GM12878 (cell line): ENCODE measurements at regions of chr3 and their contacts with region 1.

Region 1: DNA sequence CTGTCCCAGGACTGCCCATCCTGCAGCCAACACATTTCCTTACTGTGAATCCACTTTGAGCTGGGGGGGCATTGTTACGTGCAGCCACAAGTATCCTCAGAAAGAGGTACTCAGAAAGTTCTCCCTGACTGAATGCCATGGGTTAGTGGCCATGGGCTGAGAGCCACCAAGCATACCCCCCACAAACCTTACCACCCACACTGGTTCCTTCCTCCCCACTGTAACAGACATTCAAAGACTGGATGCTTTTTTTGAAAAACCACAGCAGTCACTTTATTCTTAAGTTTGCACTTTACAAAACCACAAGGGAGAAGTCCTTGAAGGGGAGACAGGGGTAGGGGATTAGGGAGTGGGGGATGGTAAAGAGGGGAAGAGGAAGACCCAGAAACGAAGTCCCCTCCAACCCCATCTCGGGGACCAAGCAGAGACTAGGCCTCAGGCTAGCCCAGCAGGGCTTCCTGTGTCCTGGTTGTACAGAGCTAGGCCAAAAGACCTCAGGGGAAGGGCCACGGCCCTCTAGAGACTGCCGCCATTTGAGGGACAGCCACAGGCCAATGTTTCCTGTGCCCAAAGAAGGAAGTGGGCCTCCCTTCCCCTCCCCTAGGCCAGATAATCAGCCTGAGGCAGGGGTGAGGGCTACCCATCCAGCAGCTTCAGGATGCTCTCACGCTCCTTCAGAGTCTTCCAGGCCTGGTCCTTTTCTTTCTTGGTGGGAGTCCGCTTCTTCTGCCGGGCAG is 10.1 kb upstream of the CAMK1 start:
- DNase-seq: peak; percentile 59
- ATAC-seq: peak; percentile 82
- H3K4me3 ChIP-seq: no peak overlapping the region
- H3K27ac ChIP-seq: peak overlapping the region; percentile 50
- H3K4me1 ChIP-seq: peaks cover 31% of the 10 kb centered on the region
- H3K27me3 ChIP-seq: no peaks in the 10 kb centered on the region
- CTCF ChIP-seq: no peak
- EP300 ChIP-seq: peak in 1 of 2 experiments; percentile 45; a peak in 1 of 4 replicates
- POLR2A ChIP-seq: no peak; the same call in 1 of the 2 replicates
- RAD21 ChIP-seq: no peak

Region 2: GRCh38 chr3:9749645-9750555 is 30.0 kb before region 1 on chr3 and contains the start of gene OGG1:
- CTCF ChIA-PET with region 1: interaction called, 3 read pairs
- POLR2A ChIA-PET with region 1: interaction called, 4 read pairs
- RAD21 ChIA-PET with region 1: interaction called, 11 read pairs
- SMC1A ChIA-PET with region 1: interaction called, 3 read pairs
- in situ Hi-C with region 1: no loop called
- intact Hi-C with region 1: no loop called
- DNase-seq: peak; percentile 95
- ATAC-seq: peak; percentile 95
- H3K4me3 ChIP-seq: peak within 1 kb of the TSS; percentile 88
- H3K27ac ChIP-seq: peak within 1 kb of the TSS; percentile 82
- H3K4me1 ChIP-seq: peaks cover 21% of the 10 kb centered on the region
- H3K27me3 ChIP-seq: no peaks in the 10 kb centered on the region
- CTCF ChIP-seq: no peak
- EP300 ChIP-seq: peak in 1 of 2 experiments; percentile 20; a peak in 1 of 4 replicates
- POLR2A ChIP-seq: peak; percentile 62
- RAD21 ChIP-seq: no peak
- polyA plus RNA-seq, gene OGG1: 4.8 to 6.9 TPM